ENCODE measurements at regions of chr3 and their contacts with region 1.

Region 1: DNA sequence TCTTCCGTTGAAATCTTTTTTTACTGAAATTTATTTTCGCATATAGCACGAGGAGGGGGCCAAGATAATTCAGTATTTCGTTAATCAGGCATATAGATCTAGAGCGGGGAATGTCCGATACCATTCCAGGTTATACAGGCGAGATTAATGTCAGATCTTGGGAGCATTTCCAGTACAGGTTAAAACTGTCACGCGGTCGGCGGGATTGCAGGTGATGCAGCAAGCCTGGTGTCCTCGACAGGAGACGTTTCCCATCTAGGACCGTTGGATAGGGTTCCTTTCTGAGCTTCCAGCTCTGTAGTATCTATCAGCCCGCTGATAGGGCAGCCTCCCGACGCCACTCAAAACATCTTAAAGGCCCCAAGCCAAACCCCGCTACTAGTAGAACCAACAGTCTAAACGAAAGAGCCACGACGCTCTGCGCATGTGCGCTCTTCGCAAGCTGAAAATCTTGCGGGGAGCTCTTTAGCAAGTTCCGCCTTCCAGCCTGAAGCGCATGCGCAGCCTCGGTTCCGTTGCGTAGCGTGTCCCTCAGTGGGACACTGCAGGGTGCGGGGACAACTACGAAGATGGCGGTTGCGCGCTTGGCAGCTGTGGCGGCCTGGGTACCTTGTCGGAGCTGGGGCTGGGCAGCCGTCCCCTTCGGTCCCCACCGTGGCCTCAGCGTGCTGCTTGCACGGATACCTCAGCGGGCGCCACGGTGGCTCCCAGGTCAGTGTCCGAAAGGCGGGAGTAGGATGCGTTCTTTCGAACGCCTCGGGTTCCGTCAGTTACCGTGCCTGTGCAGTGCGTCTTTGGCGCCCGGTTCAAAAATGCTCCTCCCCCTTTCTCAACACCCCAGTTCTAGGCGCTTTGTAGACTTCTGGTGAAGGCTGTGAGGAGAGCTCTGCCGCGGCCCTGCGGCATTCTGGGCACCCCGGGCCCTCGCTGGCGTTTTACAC is at the start of gene ABHD10:
- DNase-seq: peak; percentile 93 to 96
- H3K4me3 ChIP-seq: peak within 1 kb of the TSS; percentile 79
- H3K4me3 Mint-ChIP-seq: peak within 1 kb of the TSS; percentile 84
- H3K27ac Mint-ChIP-seq: peak within 1 kb of the TSS; percentile 88
- H3K4me1 ChIP-seq: no peaks in the 10 kb centered on the region; the same call in 1 of the 2 replicates
- H3K4me1 Mint-ChIP-seq: peaks cover 7% of the 10 kb centered on the region
- H3K27me3 ChIP-seq: no peaks in the 10 kb centered on the region
- H3K27me3 Mint-ChIP-seq: no peaks in the 10 kb centered on the region
- CTCF ChIP-seq: no peak
- total RNA-seq, gene ABHD10: 37.0 and 41.8 TPM in 2 replicates

Region 2: GRCh38 chr3:111851511-111851954 is 127.2 kb before region 1 on chr3:
- CTCF ChIA-PET with region 1: no interaction called
- POLR2A ChIA-PET with region 1: interaction called, 10 read pairs
- intact Hi-C with region 1: no loop called
- DNase-seq: no peak
- H3K4me3 ChIP-seq: no peak overlapping the region
- H3K4me3 Mint-ChIP-seq: no peak overlapping the region
- H3K27ac Mint-ChIP-seq: peak overlapping the region; percentile 17
- H3K4me1 ChIP-seq: 0 out of 2 replicates have a peak, but pooled peaks cover 4% of the 10 kb centered on the region
- H3K4me1 Mint-ChIP-seq: peaks cover 29% of the 10 kb centered on the region
- H3K27me3 ChIP-seq: no peaks in the 10 kb centered on the region
- H3K27me3 Mint-ChIP-seq: no peaks in the 10 kb centered on the region
- CTCF ChIP-seq: no peak